Posterior cingulate gyrus (tissue), 11 donors: ENCODE measurements at regions of chr3 and their contacts with region 1.

Region 1: DNA sequence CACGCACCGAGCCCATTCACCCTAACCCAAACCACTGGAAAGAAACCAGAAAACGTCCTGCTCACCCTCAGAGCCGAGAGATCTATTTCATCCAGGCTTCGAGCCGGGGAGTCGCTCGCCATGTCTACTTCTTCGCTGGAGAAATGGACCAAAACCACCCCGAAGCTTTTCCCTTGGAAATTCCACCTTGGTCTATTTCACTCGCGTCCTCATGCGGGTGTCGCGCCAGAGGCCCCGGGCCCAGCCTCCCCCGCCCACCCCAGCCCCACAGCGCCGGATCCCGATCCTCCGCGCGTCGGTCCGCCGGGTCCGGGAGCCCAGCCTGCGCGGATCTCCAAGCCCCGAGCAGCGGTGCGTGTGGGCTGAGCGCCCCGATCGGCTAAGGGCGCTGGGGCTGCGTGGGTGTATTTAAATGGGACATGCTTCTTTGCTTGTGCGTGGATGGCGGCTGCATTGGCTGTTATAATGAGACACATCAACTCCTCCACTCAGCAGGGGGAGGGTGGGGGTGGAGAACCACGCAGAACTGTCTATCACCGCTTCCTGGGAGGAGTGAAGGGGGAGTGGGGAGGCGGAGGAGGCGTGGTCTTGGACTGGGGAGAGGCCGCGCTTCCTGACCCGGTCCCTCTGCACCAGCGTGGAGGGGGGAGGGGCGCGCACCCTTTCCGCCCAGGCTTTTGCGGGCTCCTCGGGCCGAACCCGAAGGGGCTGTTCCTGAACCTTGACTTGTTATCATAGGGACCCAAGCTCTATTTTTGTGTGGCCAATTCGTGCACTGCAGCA is at the start of gene TNIK:
- DNase-seq: peak; percentile 88 to 99 (median 92)

Region 2: GRCh38 chr3:170961616-170962400 is 498.3 kb before region 1 on chr3:
- intact Hi-C with region 1: loop called (anchors 5 kb)
- DNase-seq: peak in 4 of 10 donors; percentile 10 to 77 (median 36)